CD14-positive monocyte (primary cell): ENCODE measurements at regions of chr2 and their contacts with region 1.

Region 1: GRCh38 chr2:28406276-28407096 is 13.8 kb downstream of the FOSL2 start:
- DNase-seq: peak; percentile 90 to 98 (median 95)
- H3K4me3 ChIP-seq: peak overlapping the region in 1 of 3 experiments; percentile 33
- H3K4me3 Mint-ChIP-seq: peak overlapping the region; percentile 39 to 42
- H3K27ac ChIP-seq: peak overlapping the region; percentile 92 to 93
- H3K27ac Mint-ChIP-seq: peak overlapping the region; percentile 94 to 97 (median 95)
- H3K4me1 ChIP-seq: peaks cover 87 to 89% of the 10 kb centered on the region in 2 donors
- H3K4me1 Mint-ChIP-seq: peaks cover 96% of the 10 kb centered on the region
- H3K27me3 ChIP-seq: no peaks in the 10 kb centered on the region
- H3K27me3 Mint-ChIP-seq: peaks cover 0 to 2% (median 1%) of the 10 kb centered on the region in 3 donors
- CTCF ChIP-seq: peak; percentile 21

Region 2: DNA sequence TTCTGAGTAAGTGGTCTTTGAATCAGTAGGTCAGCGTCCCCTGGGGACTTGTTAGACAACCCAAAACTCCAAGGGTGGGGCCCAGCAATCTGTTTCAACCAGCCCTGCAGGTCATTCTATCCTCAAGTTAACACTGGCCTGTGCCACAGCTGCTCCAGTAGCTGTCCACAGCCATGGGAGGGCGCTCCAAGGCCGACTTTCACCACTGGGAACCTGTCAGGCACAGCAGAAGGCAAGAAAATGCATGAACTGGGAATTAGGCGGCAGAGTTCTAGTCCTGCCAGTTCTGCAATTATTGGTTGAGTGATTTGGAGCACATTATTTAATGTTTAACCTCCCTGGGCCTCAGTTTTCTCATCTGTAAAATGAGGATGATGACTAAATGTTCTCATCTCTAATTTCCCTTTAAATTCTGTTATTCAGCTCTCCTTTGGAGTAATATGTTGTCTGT is 652.3 kb before region 1 on chr2:
- intact Hi-C with region 1: loop called in 1 of 2 experiments (anchors 10 kb)
- DNase-seq: peak; percentile 69 to 79 (median 74)
- H3K4me3 ChIP-seq: no peak overlapping the region
- H3K4me3 Mint-ChIP-seq: no peak overlapping the region
- H3K27ac ChIP-seq: peak overlapping the region in 1 of 2 donors; percentile 75
- H3K27ac Mint-ChIP-seq: peak overlapping the region in 6 of 7 donors; percentile 33 to 93 (median 72)
- H3K4me1 ChIP-seq: peaks cover 44 to 50% of the 10 kb centered on the region in 2 donors
- H3K4me1 Mint-ChIP-seq: peaks cover 47% of the 10 kb centered on the region
- H3K27me3 ChIP-seq: no peaks in the 10 kb centered on the region
- H3K27me3 Mint-ChIP-seq: no peaks in the 10 kb centered on the region
- CTCF ChIP-seq: peak; percentile 95

Region 3: GRCh38 chr2:28445448-28446258 is 39.2 kb after region 1 on chr2:
- intact Hi-C with region 1: loop called (anchors 5 kb)
- DNase-seq: peak; percentile 85 to 95 (median 88)
- H3K4me3 ChIP-seq: no peak overlapping the region
- H3K4me3 Mint-ChIP-seq: no peak overlapping the region
- H3K27ac ChIP-seq: peak overlapping the region in 1 of 2 donors; percentile 99
- H3K27ac Mint-ChIP-seq: peak overlapping the region; percentile 76 to 99 (median 87)
- H3K4me1 ChIP-seq: peaks cover 47 to 66% of the 10 kb centered on the region in 2 donors
- H3K4me1 Mint-ChIP-seq: peaks cover 65% of the 10 kb centered on the region
- H3K27me3 ChIP-seq: no peaks in the 10 kb centered on the region
- H3K27me3 Mint-ChIP-seq: peaks cover 0 to 1% (median 0%) of the 10 kb centered on the region in 3 donors
- CTCF ChIP-seq: no peak

Region 4: DNA sequence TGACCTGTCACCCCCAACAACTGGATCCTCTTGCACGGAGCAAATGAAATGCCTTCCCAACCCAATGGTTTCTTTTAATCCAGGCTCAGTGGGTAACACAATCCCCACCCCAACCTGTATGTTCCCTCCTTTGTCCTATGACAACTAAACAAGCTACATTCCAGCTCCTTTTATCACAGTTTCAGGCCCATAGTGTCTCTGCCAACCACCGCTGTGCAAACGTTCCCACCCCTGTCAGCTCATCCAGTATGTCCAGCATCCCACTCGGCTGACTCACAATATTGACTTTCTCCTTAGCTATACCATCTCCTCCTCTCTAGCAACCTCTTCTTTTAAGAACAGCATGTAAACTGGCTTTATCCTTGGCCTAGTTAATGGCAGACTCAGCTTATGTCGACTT is 227.3 kb after region 1 on chr2:
- intact Hi-C with region 1: no loop called
- DNase-seq: no peak
- H3K4me3 ChIP-seq: no peak overlapping the region
- H3K4me3 Mint-ChIP-seq: no peak overlapping the region
- H3K27ac ChIP-seq: no peak overlapping the region
- H3K27ac Mint-ChIP-seq: peak overlapping the region in 4 of 7 donors; percentile 31 to 75 (median 62)
- H3K4me1 ChIP-seq: no peaks in the 10 kb centered on the region
- H3K4me1 Mint-ChIP-seq: no peaks in the 10 kb centered on the region
- H3K27me3 ChIP-seq: no peaks in the 10 kb centered on the region
- H3K27me3 Mint-ChIP-seq: peaks cover 0 to 3% (median 1%) of the 10 kb centered on the region in 3 donors
- CTCF ChIP-seq: no peak